ENCODE measurements at regions of chr12 and their contacts with region 1.

Region 1: GRCh38 chr12:66693901-66694675 is 15.2 kb upstream of the GRIP1 start:
- DNase-seq: peak; percentile 69
- H3K4me3 ChIP-seq: no peak overlapping the region
- H3K27ac ChIP-seq: no peak overlapping the region
- H3K4me1 ChIP-seq: no peaks in the 10 kb centered on the region
- H3K27me3 ChIP-seq: peaks cover 0 to 14% of the 10 kb centered on the region in 2 experiments
- CTCF ChIP-seq: peak; percentile 33 to 44
- POLR2A ChIP-seq: no peak

Region 2: GRCh38 chr12:66269757-66270383 is 424.2 kb before region 1 on chr12:
- CTCF ChIA-PET with region 1: interaction called, 47 read pairs
- POLR2A ChIA-PET with region 1: no interaction called
- dilution Hi-C with region 1: no loop called
- intact Hi-C with region 1: no loop called
- DNase-seq: peak; percentile 34
- H3K4me3 ChIP-seq: no peak overlapping the region
- H3K27ac ChIP-seq: no peak overlapping the region
- H3K4me1 ChIP-seq: no peaks in the 10 kb centered on the region
- H3K27me3 ChIP-seq: peaks cover 0 to 4% of the 10 kb centered on the region in 2 experiments
- CTCF ChIP-seq: peak; percentile 56 to 58
- POLR2A ChIP-seq: no peak

Region 3: DNA sequence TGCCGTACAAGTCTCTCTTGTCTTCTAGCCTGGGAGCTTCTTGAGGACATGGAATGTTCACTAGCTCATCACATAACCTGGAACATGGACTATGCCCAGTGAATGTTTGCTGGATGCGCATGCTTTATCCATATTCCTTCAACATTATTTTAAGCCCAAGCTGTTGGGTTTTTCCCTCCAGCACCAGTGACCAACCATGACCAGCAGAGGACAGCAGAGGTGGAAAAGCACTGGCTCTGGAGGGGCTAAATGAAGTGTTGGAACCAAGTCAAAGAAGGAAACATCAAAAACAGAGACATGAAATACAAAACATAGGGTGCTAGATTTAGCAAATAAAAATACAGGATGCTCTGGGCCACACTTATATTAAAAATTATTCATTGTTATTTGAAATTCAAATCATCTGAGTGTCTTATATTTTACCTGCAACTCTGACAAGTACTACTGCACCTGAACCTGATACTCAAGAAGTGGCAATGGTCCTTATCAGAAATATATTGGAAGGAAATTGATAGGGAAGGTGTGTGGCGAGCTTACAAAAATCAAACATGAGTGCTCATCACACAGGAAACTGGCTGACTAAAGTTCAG is 414.9 kb before region 1 on chr12:
- CTCF ChIA-PET with region 1: interaction called, 33 read pairs
- POLR2A ChIA-PET with region 1: no interaction called
- dilution Hi-C with region 1: no loop called
- intact Hi-C with region 1: loop called (anchors 2 kb)
- DNase-seq: peak; percentile 48
- H3K4me3 ChIP-seq: no peak overlapping the region
- H3K27ac ChIP-seq: no peak overlapping the region
- H3K4me1 ChIP-seq: peaks cover 2% of the 10 kb centered on the region
- H3K27me3 ChIP-seq: no peaks in the 10 kb centered on the region
- CTCF ChIP-seq: peak; percentile 63 to 69
- POLR2A ChIP-seq: no peak

Region 4: GRCh38 chr12:66352197-66352596 is 341.9 kb before region 1 on chr12:
- CTCF ChIA-PET with region 1: interaction called, 64 read pairs
- POLR2A ChIA-PET with region 1: no interaction called
- dilution Hi-C with region 1: no loop called
- intact Hi-C with region 1: loop called (anchors 1 kb)
- DNase-seq: peak; percentile 27
- H3K4me3 ChIP-seq: no peak overlapping the region
- H3K27ac ChIP-seq: no peak overlapping the region
- H3K4me1 ChIP-seq: no peaks in the 10 kb centered on the region
- H3K27me3 ChIP-seq: no peaks in the 10 kb centered on the region
- CTCF ChIP-seq: peak; percentile 19 to 35
- POLR2A ChIP-seq: no peak

Region 5: GRCh38 chr12:66428261-66428660 is 265.8 kb before region 1 on chr12:
- CTCF ChIA-PET with region 1: interaction called, 9 read pairs
- POLR2A ChIA-PET with region 1: no interaction called
- dilution Hi-C with region 1: no loop called
- intact Hi-C with region 1: loop called (anchors 5 kb)
- DNase-seq: no peak
- H3K4me3 ChIP-seq: no peak overlapping the region
- H3K27ac ChIP-seq: no peak overlapping the region
- H3K4me1 ChIP-seq: no peaks in the 10 kb centered on the region
- H3K27me3 ChIP-seq: peaks cover 9 to 14% of the 10 kb centered on the region in 2 experiments
- CTCF ChIP-seq: no peak
- POLR2A ChIP-seq: no peak

Region 6: GRCh38 chr12:66683073-66683472 is 11.0 kb before region 1 on chr12:
- CTCF ChIA-PET with region 1: interaction called, 14 read pairs
- POLR2A ChIA-PET with region 1: no interaction called
- dilution Hi-C with region 1: no loop called
- intact Hi-C with region 1: no loop called
- DNase-seq: no peak
- H3K4me3 ChIP-seq: no peak overlapping the region
- H3K27ac ChIP-seq: no peak overlapping the region
- H3K4me1 ChIP-seq: no peaks in the 10 kb centered on the region
- H3K27me3 ChIP-seq: peaks cover 17 to 26% of the 10 kb centered on the region in 2 experiments
- CTCF ChIP-seq: no peak
- POLR2A ChIP-seq: no peak

Region 7: DNA sequence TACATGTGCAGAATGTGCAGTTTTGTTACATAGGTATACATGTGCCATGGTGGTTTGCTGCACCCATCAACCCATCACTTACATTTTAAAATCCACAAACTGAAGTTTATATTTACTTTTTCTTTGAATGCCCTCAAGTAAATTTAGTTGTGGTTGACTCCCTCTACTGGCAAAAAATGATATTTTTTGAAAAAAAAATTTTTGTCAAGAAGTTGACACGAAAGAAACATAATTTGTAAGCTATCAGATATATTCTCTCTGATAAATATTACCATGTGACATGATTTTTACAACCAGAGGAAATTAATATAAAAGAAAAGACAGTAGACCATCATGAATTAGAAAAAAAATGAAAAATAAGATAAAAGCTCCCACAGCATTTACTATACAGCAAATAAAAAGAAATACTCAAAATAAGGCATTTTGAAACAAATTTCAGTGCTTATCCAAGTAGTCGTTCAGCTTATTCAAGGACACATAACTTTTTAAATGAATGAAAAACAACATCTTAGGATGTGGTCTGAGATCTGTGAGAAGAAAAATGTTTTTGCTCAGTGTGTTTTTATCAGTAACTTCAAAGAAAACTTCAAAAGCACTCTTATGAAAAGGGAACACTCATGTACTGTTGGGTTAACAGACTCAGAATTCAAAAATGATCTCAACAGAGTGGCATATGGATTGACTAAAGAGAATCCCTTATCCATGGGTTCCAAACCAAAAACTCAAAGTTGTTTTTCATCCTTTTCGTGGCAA is 14.8 kb after region 1 on chr12:
- CTCF ChIA-PET with region 1: interaction called, 57 read pairs
- POLR2A ChIA-PET with region 1: no interaction called
- dilution Hi-C with region 1: no loop called
- intact Hi-C with region 1: no loop called
- DNase-seq: peak; percentile 34
- H3K4me3 ChIP-seq: no peak overlapping the region
- H3K27ac ChIP-seq: no peak overlapping the region
- H3K4me1 ChIP-seq: no peaks in the 10 kb centered on the region
- H3K27me3 ChIP-seq: peaks cover 5 to 23% of the 10 kb centered on the region in 2 experiments
- CTCF ChIP-seq: peak; percentile 7 to 15
- POLR2A ChIP-seq: no peak

Measured in endothelial cell of umbilical vein (primary cell).